ENCODE measurements at regions of chr4 and their contacts with region 1.

Region 1: GRCh38 chr4:81844717-81845116 is 373.0 kb upstream of the RASGEF1B start:
- DNase-seq: peak; percentile 46
- H3K4me3 Mint-ChIP-seq: no peak overlapping the region
- H3K27ac Mint-ChIP-seq: no peak overlapping the region
- H3K4me1 Mint-ChIP-seq: peaks cover 4% of the 10 kb centered on the region
- H3K27me3 Mint-ChIP-seq: peaks cover 7% of the 10 kb centered on the region

Region 2: GRCh38 chr4:81565142-81565870 is 279.4 kb before region 1 on chr4:
- intact Hi-C with region 1: loop called (anchors 10 kb)
- DNase-seq: no peak
- H3K4me3 Mint-ChIP-seq: no peak overlapping the region
- H3K27ac Mint-ChIP-seq: peak overlapping the region; percentile 48
- H3K4me1 Mint-ChIP-seq: peaks cover 7% of the 10 kb centered on the region
- H3K27me3 Mint-ChIP-seq: peaks cover 2% of the 10 kb centered on the region

Region 3: GRCh38 chr4:81724925-81725329 is 119.8 kb before region 1 on chr4:
- intact Hi-C with region 1: loop called (anchors 1 kb)
- DNase-seq: peak; percentile 37
- H3K4me3 Mint-ChIP-seq: no peak overlapping the region
- H3K27ac Mint-ChIP-seq: no peak overlapping the region
- H3K4me1 Mint-ChIP-seq: peaks cover 17% of the 10 kb centered on the region
- H3K27me3 Mint-ChIP-seq: peaks cover 19% of the 10 kb centered on the region

Region 4: DNA sequence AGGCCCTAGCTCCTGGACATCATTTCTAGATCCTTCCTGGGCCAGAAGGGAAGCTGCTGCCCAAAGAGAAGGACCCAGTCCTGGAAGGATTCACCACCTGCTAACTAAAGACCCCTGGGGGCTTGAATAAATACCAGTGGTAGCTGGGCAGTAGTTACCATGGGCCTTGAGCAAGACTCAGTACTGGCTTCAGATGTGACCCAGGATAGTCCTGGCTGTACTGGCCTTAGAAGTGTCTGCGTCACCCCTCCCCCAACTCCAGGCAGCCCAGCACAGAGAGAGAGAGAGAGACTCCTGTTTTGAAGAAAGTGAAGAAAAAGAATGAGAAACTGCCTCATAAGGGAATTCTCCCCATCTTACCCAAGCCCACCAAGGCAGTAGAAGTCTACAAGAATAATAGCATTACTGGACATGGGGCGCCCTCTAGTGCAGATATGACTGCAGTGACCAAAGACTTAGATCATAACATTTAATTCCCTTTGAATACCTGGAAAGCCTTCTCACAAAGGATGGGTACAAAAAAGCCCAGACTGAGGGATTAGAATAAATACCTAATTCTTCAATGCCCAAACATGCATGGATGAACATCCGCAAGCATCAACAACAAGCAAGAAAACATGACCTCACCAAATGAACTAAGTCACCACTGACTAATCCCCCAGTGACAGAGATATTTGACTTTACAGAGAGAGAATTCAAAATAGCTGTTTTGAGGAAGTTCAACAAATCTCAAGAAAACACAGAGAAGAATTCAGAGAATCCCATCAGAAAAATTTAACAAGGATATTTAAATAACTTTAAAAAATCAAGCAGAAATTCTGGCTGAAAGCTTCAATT is 357.3 kb after region 1 on chr4:
- intact Hi-C with region 1: loop called (anchors 1 kb)
- DNase-seq: no peak
- H3K4me3 Mint-ChIP-seq: no peak overlapping the region
- H3K27ac Mint-ChIP-seq: no peak overlapping the region
- H3K4me1 Mint-ChIP-seq: no peaks in the 10 kb centered on the region
- H3K27me3 Mint-ChIP-seq: peaks cover 8% of the 10 kb centered on the region

Region 5: DNA sequence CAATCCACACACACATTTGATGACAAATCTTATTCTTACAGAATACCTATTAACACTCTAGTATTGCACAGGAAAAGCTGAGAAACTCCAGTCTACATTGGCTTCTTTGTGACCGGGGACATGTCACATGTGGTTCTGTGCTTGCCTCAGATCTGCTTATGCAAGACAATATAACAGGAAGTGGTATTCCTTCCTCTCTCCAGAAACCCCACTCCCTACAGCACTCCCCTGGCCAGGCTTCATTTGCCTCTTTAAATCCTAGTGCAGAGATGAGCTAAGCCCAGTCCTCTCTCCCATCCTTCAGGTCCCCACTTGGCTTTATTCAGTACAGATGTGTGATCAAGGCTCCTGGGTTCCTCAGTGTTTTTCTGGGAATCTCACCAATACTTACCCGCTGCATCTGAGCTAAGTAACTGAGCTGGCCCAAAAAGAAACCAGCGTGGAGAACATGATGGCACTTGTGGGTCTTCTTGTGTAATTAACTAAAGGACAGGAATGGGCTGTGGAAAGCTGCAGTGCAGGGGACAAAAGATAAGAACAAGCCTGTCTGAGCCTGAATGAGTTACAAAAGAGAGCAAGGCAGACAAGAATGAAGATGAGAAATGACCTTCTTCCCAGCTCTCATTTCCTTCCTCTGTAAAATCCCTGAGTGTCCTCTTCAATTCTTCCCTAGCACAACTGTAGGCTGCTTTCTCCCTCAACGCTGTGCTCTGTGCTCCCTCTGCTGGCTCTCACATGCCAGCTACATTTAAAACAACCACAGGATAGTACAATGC is 423.5 kb after region 1 on chr4:
- intact Hi-C with region 1: loop called (anchors 1 kb)
- DNase-seq: peak; percentile 20
- H3K4me3 Mint-ChIP-seq: no peak overlapping the region
- H3K27ac Mint-ChIP-seq: peak overlapping the region; percentile 6
- H3K4me1 Mint-ChIP-seq: peaks cover 10% of the 10 kb centered on the region
- H3K27me3 Mint-ChIP-seq: peaks cover 7% of the 10 kb centered on the region

Measured in activated T-helper 1 cell treated with anti-CD3 and anti-CD28 coated beads, Interleukin-12 subunit alpha, Interleukin-12 subunit beta, Interleukin-2, Interleukin-4 antibody, amounts not matched to agents 30 ng/mL and 10 ng/mL and 1 ng/mL, durations not matched to agents 14 hours and 24 hours and 36 hours (primary cell).